Activated T-helper 2 cell treated with anti-CD3 and anti-CD28 coated beads, Interferon-gamma antibody, Interleukin-2, Interleukin-4, amounts not matched to agents 10 μg/mL and 5 μg/mL and 100 μg/mL, durations not matched to agents 14 hours and 24 hours and 36 hours (primary cell): ENCODE measurements at regions of chr3 and their contacts with region 1.

Region 1: GRCh38 chr3:72818092-72818773 is 30.0 kb downstream of the SHQ1 start:
- DNase-seq: no peak
- H3K4me3 Mint-ChIP-seq: no peak overlapping the region
- H3K27ac Mint-ChIP-seq: no peak overlapping the region
- H3K4me1 Mint-ChIP-seq: peaks cover 40% of the 10 kb centered on the region
- H3K27me3 Mint-ChIP-seq: no peaks in the 10 kb centered on the region

Region 2: GRCh38 chr3:71875461-71875947 is 942.7 kb before region 1 on chr3:
- intact Hi-C with region 1: loop called (anchors 1 kb)
- DNase-seq: peak; percentile 63
- H3K4me3 Mint-ChIP-seq: no peak overlapping the region
- H3K27ac Mint-ChIP-seq: peak overlapping the region; percentile 17
- H3K4me1 Mint-ChIP-seq: peaks cover 29% of the 10 kb centered on the region
- H3K27me3 Mint-ChIP-seq: peaks cover 4% of the 10 kb centered on the region

Region 3: GRCh38 chr3:72339116-72340030 is 478.9 kb before region 1 on chr3:
- intact Hi-C with region 1: loop called (anchors 5 kb)
- DNase-seq: no peak
- H3K4me3 Mint-ChIP-seq: no peak overlapping the region
- H3K27ac Mint-ChIP-seq: no peak overlapping the region
- H3K4me1 Mint-ChIP-seq: peaks cover 29% of the 10 kb centered on the region
- H3K27me3 Mint-ChIP-seq: no peaks in the 10 kb centered on the region

Region 4: DNA sequence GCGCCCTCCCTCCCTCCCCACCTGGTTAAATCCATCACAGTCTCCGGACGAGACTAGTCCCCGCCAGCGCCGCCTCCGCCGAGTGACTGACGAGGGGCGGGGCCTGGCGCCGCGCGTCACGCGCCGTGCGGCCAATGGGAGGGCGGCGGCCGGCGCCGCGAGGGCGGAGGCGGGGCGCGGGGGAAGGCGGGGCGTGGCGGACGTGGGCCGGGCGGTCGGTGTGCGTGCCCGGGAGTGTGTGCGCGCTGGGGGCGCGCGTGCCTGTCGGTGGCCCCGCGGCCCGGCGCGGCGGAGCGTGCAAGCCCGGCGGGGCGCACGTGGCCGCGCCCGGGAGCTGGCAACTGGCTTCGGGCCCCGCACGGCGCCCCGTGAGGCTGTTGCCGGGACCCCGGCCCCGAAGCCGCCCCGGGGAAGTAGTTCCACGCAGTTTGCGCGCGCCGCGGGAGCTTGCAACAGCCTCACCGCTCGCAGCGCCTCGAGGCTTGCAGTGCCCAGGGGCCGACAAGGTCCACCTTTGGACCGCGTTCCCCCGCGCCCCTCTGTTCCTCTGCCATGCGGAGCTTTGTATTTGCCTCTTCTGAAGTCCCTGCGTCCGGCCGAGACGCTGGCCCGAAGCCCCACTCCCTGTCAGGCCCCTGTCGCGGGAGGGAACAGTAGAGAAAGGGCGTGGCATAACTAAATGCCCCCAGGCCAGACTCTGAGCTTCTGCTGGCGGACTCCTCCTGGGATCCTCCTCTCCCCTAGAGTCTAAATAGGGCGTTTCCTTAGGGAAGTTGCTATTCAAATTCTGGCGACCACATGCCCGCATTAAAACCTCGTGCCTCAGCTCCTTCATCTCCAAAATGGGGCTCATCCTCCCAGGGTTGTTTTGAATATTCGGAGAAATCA is 370.9 kb before region 1 on chr3:
- intact Hi-C with region 1: loop called (anchors 2 kb)
- DNase-seq: peak; percentile 92
- H3K4me3 Mint-ChIP-seq: peak overlapping the region; percentile 66
- H3K27ac Mint-ChIP-seq: peak overlapping the region; percentile 60
- H3K4me1 Mint-ChIP-seq: peaks cover 52% of the 10 kb centered on the region
- H3K27me3 Mint-ChIP-seq: no peaks in the 10 kb centered on the region

Region 5: GRCh38 chr3:72665701-72666443 is 152.4 kb before region 1 on chr3:
- intact Hi-C with region 1: loop called (anchors 1 kb)
- DNase-seq: peak; percentile 19
- H3K4me3 Mint-ChIP-seq: no peak overlapping the region
- H3K27ac Mint-ChIP-seq: no peak overlapping the region
- H3K4me1 Mint-ChIP-seq: no peaks in the 10 kb centered on the region
- H3K27me3 Mint-ChIP-seq: no peaks in the 10 kb centered on the region